ENCODE measurements at regions of chr13 and their contacts with region 1.

Region 1: DNA sequence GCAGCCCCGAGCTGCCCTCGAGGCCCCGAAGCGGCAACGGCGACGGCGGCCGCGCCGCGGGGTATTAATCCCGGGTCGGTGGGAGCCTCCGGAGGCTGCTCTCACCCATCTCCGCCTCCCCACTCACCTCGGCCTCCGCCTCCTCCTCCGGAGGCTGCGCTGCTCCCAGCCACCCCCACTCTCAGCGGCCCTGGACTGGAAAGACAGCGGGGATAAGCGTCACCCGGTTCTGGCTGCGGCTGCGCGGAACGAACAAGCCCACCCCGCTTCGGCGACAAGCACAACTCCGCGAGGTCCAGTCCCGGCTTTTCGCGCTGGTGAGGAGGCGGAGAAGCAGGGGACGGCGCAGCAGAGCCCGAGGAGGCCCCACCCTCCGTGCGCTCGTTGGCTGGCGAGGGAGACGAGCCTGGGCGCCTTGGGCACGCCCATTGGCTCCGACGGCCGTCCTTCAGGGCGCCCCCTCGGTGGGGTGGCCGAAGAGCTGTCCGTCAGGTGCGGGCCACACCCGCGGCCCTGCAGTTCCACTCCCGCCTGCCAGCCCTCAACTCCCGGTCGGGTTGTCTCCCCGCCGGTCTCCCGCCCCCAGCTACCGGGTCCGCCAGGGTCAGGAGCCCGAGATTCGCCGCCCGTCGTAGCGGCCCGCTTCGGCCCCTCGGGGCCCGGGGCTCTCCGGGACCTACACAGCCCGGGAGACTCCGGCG is at the start of gene ZMYM5:
- DNase-seq: peak; percentile 99
- ATAC-seq: peak; percentile 82
- H3K4me3 ChIP-seq: peak within 1 kb of the TSS; percentile 91
- H3K27ac ChIP-seq: peak within 1 kb of the TSS; percentile 91
- H3K4me1 ChIP-seq: peaks cover 29% of the 10 kb centered on the region
- H3K27me3 ChIP-seq: no peaks in the 10 kb centered on the region
- CTCF ChIP-seq: no peak
- total RNA-seq, gene ZMYM5: 7.5 and 7.6 TPM in 2 replicates

Region 2: DNA sequence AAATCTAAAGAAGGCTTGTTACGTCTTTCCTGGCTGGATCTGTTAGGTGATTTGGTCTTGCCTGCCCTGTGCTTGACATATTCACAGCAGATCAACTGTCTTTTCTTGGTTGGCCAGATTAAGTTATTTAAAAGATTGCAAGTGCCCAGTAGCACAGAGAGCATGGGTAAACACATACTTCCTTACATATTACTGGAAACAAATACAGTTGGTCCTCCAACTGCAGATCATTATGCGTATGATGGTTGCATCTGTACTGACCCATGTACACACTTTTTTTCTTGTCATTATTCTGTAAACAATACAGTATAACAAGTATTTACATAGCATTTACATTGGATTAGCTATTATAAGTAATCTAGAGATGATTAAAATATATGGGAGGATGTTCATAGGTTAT is 239.2 kb before region 1 on chr13:
- CTCF ChIA-PET with region 1: no interaction called
- POLR2A ChIA-PET with region 1: interaction called, 12 read pairs
- intact Hi-C with region 1: no loop called
- DNase-seq: no peak
- ATAC-seq: no peak
- H3K4me3 ChIP-seq: no peak overlapping the region
- H3K27ac ChIP-seq: no peak overlapping the region
- H3K4me1 ChIP-seq: peaks cover 5% of the 10 kb centered on the region; the same call in 1 of the 2 replicates
- H3K27me3 ChIP-seq: no peaks in the 10 kb centered on the region
- CTCF ChIP-seq: no peak

Region 3: GRCh38 chr13:19782049-19782726 is 81.3 kb before region 1 on chr13:
- CTCF ChIA-PET with region 1: interaction called, 6 read pairs
- POLR2A ChIA-PET with region 1: interaction called, 3 read pairs
- intact Hi-C with region 1: loop called (anchors 1 kb)
- DNase-seq: peak; percentile 26
- ATAC-seq: peak; percentile 48
- H3K4me3 ChIP-seq: peak overlapping the region; percentile 99
- H3K27ac ChIP-seq: peak overlapping the region; percentile 72
- H3K4me1 ChIP-seq: no peaks in the 10 kb centered on the region
- H3K27me3 ChIP-seq: no peaks in the 10 kb centered on the region
- CTCF ChIP-seq: no peak

Region 4: DNA sequence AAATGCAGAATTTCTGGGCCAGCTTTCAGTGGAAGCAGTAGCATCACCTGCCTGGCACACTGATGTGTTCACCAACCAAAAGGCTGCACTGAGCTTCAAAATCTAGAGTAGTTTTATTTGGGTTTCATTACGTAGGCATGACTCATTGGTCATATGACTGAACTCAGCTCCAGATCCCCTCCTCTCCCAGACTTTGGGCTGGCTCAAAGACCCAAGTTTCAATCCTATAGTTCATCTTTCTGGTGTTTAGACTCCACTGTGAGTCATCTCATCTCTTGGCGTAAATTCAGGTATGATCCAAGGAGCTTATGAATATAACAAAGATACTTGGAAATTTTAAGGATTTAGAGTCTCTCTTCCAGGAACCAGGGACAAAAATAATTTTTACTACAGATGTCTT is 17.7 kb before region 1 on chr13:
- CTCF ChIA-PET with region 1: interaction called, 8 read pairs
- POLR2A ChIA-PET with region 1: interaction called, 15 read pairs
- intact Hi-C with region 1: loop called (anchors 1 kb)
- DNase-seq: peak; percentile 99
- ATAC-seq: peak; percentile 98
- H3K4me3 ChIP-seq: no peak overlapping the region
- H3K27ac ChIP-seq: peak overlapping the region; percentile 89
- H3K4me1 ChIP-seq: peaks cover 17% of the 10 kb centered on the region
- H3K27me3 ChIP-seq: no peaks in the 10 kb centered on the region
- CTCF ChIP-seq: no peak

Region 5: GRCh38 chr13:19910336-19911072 is 47.0 kb after region 1 on chr13:
- CTCF ChIA-PET with region 1: no interaction called
- POLR2A ChIA-PET with region 1: no interaction called
- intact Hi-C with region 1: loop called (anchors 1 kb)
- DNase-seq: peak; percentile 94
- ATAC-seq: peak; percentile 93
- H3K4me3 ChIP-seq: no peak overlapping the region; the same call in 1 of the 2 replicates
- H3K27ac ChIP-seq: peak overlapping the region; percentile 54
- H3K4me1 ChIP-seq: peaks cover 13% of the 10 kb centered on the region
- H3K27me3 ChIP-seq: no peaks in the 10 kb centered on the region
- CTCF ChIP-seq: no peak

Region 6: DNA sequence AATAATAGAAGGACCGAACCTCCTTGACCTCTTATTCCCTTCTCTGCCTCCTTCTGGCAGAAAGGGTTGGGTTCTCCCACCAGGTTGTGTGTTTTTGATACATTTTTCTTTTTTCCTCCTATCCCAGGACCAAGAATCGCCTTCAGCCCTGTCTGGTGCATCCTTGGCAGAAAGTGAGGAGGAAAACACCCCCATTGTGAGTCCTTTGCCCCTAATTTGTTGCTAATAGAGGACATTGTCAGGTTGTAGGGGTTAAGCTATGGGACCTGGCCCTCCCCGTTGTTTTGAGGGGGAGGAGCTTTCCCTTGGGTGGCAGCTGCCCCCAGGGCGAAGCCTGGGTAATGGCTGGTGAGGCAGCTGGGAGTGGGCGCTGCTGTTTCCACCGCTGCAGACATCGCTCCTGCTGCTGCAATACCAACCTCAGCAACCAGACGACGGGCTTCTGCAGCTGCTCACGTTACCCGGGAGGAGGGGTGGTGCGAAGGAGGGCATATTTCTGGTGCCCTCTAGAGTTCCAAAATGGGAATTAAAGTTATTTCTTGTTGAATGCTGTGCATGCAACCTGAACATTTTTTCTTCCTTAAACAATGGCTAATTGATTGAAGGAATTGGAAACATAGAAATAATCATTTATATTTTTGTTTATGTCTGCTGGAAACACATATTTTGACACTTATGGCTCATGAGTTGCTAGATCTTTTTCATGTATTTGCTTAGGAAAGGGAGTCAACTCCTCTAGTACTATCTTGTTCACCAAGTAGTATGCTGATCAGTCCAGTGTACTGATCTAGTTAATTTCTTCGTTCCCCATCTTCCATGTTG is 96.6 kb after region 1 on chr13:
- CTCF ChIA-PET with region 1: no interaction called
- POLR2A ChIA-PET with region 1: no interaction called
- intact Hi-C with region 1: loop called (anchors 2 kb)
- DNase-seq: peak; percentile 95
- ATAC-seq: peak; percentile 57
- H3K4me3 ChIP-seq: peak overlapping the region; percentile 81
- H3K27ac ChIP-seq: peak overlapping the region; percentile 37
- H3K4me1 ChIP-seq: peaks cover 31% of the 10 kb centered on the region
- H3K27me3 ChIP-seq: no peaks in the 10 kb centered on the region
- CTCF ChIP-seq: peak; percentile 83